ENCODE measurements at regions of chr9 and their contacts with region 1.

Region 1: GRCh38 chr9:96566498-96567207 is 53.0 kb downstream of the CDC14B start:
- DNase-seq: peak; percentile 88
- H3K4me3 ChIP-seq: peak overlapping the region; percentile 55 to 83 (median 78)
- H3K27ac ChIP-seq: peak overlapping the region; percentile 86 to 90 (median 88)
- H3K4me1 ChIP-seq: peaks cover 0 to 24% (median 11%) of the 10 kb centered on the region in 4 donors
- H3K27me3 ChIP-seq: no peaks in the 10 kb centered on the region
- CTCF ChIP-seq: peak; percentile 31 to 63 (median 44)
- EP300 ChIP-seq: no peak
- POLR2A ChIP-seq: no peak

Region 2: DNA sequence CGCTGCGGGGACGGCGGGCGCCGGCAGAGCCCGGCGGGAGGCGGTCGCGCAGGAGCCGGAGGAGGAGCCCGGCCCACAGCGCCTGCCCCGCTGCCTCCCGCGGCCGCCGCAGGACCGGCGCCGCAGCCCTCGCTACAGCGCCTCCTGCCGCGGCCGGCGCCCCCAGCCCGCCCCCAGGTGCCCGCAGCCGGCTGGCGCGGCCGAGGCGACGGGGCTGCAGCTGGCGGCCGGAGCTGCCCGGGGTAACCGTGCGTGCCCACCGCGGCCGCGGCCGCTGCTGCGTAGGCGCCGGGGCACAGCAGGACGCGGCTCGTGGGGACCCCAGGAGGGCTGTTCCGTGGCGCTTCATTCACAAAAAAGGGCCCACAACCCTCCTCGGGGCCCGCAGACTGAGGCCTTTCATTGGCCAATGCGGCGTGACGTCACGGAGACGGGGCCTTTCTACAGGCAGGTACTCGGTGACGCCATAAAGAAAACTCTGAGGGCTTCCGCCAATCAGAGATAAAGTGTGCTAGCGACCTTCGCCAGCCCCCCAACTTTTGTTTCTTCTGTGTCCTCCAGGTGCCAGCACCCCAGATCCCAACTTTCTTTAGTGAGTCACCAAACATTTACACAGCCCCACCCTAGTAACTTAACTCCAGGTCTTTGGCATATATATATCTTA is 53.0 kb after region 1 on chr9 and contains the start of gene CDC14B:
- intact Hi-C with region 1: loop called (anchors 2 kb)
- DNase-seq: peak; percentile 96
- H3K4me3 ChIP-seq: peak within 1 kb of the TSS; percentile 45 to 92 (median 77)
- H3K27ac ChIP-seq: peak within 1 kb of the TSS; percentile 75 to 90 (median 82)
- H3K4me1 ChIP-seq: peaks cover 0 to 15% (median 6%) of the 10 kb centered on the region in 4 donors
- H3K27me3 ChIP-seq: no peaks in the 10 kb centered on the region
- CTCF ChIP-seq: no peak
- EP300 ChIP-seq: no peak
- POLR2A ChIP-seq: no peak
- total RNA-seq, gene CDC14B: 12.5 to 35.7 (median 17.6) TPM